ENCODE measurements at regions of chr3 and their contacts with region 1.

Region 1: DNA sequence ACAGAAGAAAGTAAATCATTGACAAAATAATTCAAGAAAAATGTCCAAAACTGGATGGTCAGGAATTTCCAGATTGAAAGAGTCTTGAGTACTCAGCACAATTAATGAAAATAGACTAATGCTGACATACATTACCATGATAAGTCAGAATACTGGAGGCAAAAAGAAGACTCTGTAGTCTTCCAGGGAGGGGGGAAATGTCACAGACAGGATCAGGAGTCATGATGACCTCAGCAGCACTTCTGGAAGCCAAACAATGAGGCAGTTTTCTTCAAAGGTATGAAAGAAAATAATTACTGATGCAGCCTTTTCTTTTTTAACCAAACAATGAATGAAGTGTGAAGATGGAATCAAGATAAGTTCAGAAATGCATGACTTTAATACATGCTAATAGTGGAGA is 30.1 kb upstream of the SLC22A13 start:
- DNase-seq: peak; percentile 32
- H3K4me3 ChIP-seq: no peak overlapping the region
- H3K27ac ChIP-seq: no peak overlapping the region
- H3K4me1 ChIP-seq: no peaks in the 10 kb centered on the region
- H3K27me3 ChIP-seq: no peaks in the 10 kb centered on the region
- CTCF ChIP-seq: no peak

Region 2: GRCh38 chr3:38067508-38068233 is 167.8 kb before region 1 on chr3:
- CTCF ChIA-PET with region 1: no interaction called
- dilution Hi-C with region 1: no loop called
- in situ Hi-C with region 1: no loop called
- intact Hi-C with region 1: no loop called
- DNase-seq: peak; percentile 35
- H3K4me3 ChIP-seq: no peak overlapping the region
- H3K27ac ChIP-seq: no peak overlapping the region
- H3K4me1 ChIP-seq: no peaks in the 10 kb centered on the region
- H3K27me3 ChIP-seq: no peaks in the 10 kb centered on the region
- CTCF ChIP-seq: no peak

Region 3: GRCh38 chr3:38281895-38282675 is 46.6 kb after region 1 on chr3 and contains the start of gene SLC22A14:
- CTCF ChIA-PET with region 1: no interaction called
- dilution Hi-C with region 1: loop called (anchors 5 kb)
- in situ Hi-C with region 1: no loop called
- intact Hi-C with region 1: no loop called
- DNase-seq: peak; percentile 58
- H3K4me3 ChIP-seq: no peak within 1 kb of the TSS
- H3K27ac ChIP-seq: no peak within 1 kb of the TSS
- H3K4me1 ChIP-seq: peaks cover 4% of the 10 kb centered on the region
- H3K27me3 ChIP-seq: no peaks in the 10 kb centered on the region
- CTCF ChIP-seq: peak in 1 of 2 donors; percentile 16
- total RNA-seq, gene SLC22A14: 0.33 to 0.75 TPM

Region 4: GRCh38 chr3:39960515-39961191 is 1725.2 kb after region 1 on chr3:
- CTCF ChIA-PET with region 1: no interaction called
- dilution Hi-C with region 1: no loop called
- in situ Hi-C with region 1: no loop called
- intact Hi-C with region 1: no loop called
- DNase-seq: no peak
- H3K4me3 ChIP-seq: no peak overlapping the region
- H3K27ac ChIP-seq: no peak overlapping the region
- H3K4me1 ChIP-seq: no peaks in the 10 kb centered on the region
- H3K27me3 ChIP-seq: peaks cover 3% of the 10 kb centered on the region
- CTCF ChIP-seq: no peak